Activated naive CD4-positive, alpha-beta T cell treated with anti-CD3 and anti-CD28 coated beads for 36 hours (primary cell): ENCODE measurements at regions of chr20 and their contacts with region 1.

Region 1: GRCh38 chr20:36506253-36506652 is 35.1 kb upstream of the MYL9 start:
- DNase-seq: peak; percentile 20
- H3K4me3 Mint-ChIP-seq: no peak overlapping the region
- H3K27ac Mint-ChIP-seq: no peak overlapping the region
- H3K4me1 Mint-ChIP-seq: peaks cover 15% of the 10 kb centered on the region
- H3K27me3 Mint-ChIP-seq: no peaks in the 10 kb centered on the region

Region 2: DNA sequence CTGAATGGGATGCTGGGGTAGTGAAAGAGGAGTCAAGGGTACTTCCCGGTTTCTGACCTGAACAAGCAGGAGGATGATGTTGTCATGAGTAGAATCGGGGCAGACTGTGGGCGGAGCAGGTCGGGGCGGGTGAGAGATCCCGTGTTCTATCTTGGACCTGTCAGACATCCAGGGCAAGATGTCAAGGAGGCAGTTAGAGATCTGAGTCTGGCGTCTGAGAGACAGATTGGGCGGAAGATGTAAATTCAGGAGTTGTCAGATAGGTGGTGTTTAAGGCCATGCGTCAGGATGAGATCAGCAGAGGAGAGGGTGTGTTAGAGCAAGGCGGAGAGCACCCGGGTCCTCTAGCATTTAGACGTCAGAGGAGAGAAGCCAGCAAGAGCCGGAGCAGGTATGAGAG is 84.6 kb before region 1 on chr20:
- CTCF ChIA-PET with region 1: no interaction called
- intact Hi-C with region 1: no loop called
- DNase-seq: no peak
- H3K4me3 Mint-ChIP-seq: no peak overlapping the region
- H3K27ac Mint-ChIP-seq: no peak overlapping the region
- H3K4me1 Mint-ChIP-seq: no peaks in the 10 kb centered on the region
- H3K27me3 Mint-ChIP-seq: peaks cover 4% of the 10 kb centered on the region

Region 3: GRCh38 chr20:36472637-36473081 is 33.6 kb before region 1 on chr20:
- CTCF ChIA-PET with region 1: no interaction called
- intact Hi-C with region 1: no loop called
- DNase-seq: peak; percentile 51
- H3K4me3 Mint-ChIP-seq: peak overlapping the region; percentile 38
- H3K27ac Mint-ChIP-seq: peak overlapping the region; percentile 46
- H3K4me1 Mint-ChIP-seq: peaks cover 34% of the 10 kb centered on the region
- H3K27me3 Mint-ChIP-seq: no peaks in the 10 kb centered on the region

Region 4: GRCh38 chr20:36886859-36887751 is 380.9 kb after region 1 on chr20:
- CTCF ChIA-PET with region 1: no interaction called
- intact Hi-C with region 1: loop called (anchors 1 kb)
- DNase-seq: peak; percentile 92
- H3K4me3 Mint-ChIP-seq: no peak overlapping the region
- H3K27ac Mint-ChIP-seq: peak overlapping the region; percentile 54
- H3K4me1 Mint-ChIP-seq: peaks cover 10% of the 10 kb centered on the region
- H3K27me3 Mint-ChIP-seq: no peaks in the 10 kb centered on the region